ENCODE measurements at regions of chr7 and their contacts with region 1.

Region 1: GRCh38 chr7:140479062-140479738 is at the start of gene MKRN1:
- DNase-seq: peak; percentile 92
- ATAC-seq: peak; percentile 89
- H3K4me3 Mint-ChIP-seq: peak within 1 kb of the TSS; percentile 100
- H3K27ac Mint-ChIP-seq: peak within 1 kb of the TSS; percentile 99
- H3K4me1 Mint-ChIP-seq: peaks cover 30% of the 10 kb centered on the region
- H3K27me3 Mint-ChIP-seq: no peaks in the 10 kb centered on the region
- CTCF ChIP-seq: no peak
- total RNA-seq, gene MKRN1: 94.3 and 99.9 TPM in 2 replicates

Region 2: DNA sequence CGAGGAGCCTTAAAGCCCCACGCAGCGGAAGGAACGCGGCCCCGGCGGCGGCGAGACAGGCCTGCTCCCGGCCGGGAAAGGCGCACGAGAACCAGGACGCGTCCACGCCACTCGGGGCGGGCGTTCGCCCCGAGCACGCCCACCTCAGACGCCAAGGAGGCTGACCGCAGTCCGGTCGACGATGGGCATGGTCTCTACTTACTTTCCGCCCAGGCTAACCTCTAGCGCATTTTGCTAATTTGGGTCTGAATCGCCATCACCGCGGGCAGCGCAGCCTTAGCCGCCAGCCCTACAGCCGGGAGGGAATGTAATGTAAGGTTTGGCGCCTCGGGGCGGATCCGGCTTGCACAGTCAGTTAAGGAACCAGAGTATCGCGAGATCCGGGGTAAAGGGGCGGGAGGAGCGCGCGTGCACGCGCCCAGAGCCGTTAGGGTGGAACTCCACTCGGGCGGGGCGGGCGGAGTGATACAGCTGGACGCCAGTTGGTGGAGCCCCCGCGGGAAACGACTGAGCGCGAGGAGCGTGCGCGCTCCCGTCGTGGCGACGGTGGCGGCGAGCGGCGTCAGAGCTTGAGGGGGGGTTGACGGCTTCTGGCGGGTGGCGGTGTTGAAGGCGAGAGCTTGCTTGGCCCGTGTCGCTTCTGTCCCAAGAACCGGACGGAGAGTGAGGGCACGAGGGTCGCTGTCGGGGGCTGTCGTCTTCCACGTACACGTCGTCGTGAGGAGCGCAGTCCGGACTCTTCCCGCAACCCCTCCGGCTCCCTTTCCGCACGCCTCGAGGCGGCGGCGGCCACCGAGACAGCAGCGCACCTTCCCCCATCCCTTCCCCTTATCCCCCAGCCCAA is 1119.6 kb before region 1 on chr7 and contains the start of gene LUC7L2:
- CTCF ChIA-PET with region 1: no interaction called
- POLR2A ChIA-PET with region 1: no interaction called
- intact Hi-C with region 1: loop called (anchors 10 kb)
- DNase-seq: peak; percentile 97
- ATAC-seq: peak; percentile 78
- H3K4me3 Mint-ChIP-seq: peak within 1 kb of the TSS; percentile 98
- H3K27ac Mint-ChIP-seq: peak within 1 kb of the TSS; percentile 100
- H3K4me1 Mint-ChIP-seq: peaks cover 41% of the 10 kb centered on the region
- H3K27me3 Mint-ChIP-seq: no peaks in the 10 kb centered on the region
- CTCF ChIP-seq: no peak
- total RNA-seq, gene LUC7L2: 94.0 and 118 TPM in 2 replicates

Region 3: GRCh38 chr7:140230861-140231770 is 248.1 kb before region 1 on chr7:
- CTCF ChIA-PET with region 1: no interaction called
- POLR2A ChIA-PET with region 1: no interaction called
- intact Hi-C with region 1: loop called (anchors 5 kb)
- DNase-seq: no peak
- ATAC-seq: peak; percentile 30
- H3K4me3 Mint-ChIP-seq: peak overlapping the region; percentile 91
- H3K27ac Mint-ChIP-seq: peak overlapping the region; percentile 95
- H3K4me1 Mint-ChIP-seq: peaks cover 59% of the 10 kb centered on the region
- H3K27me3 Mint-ChIP-seq: no peaks in the 10 kb centered on the region
- CTCF ChIP-seq: no peak

Region 4: DNA sequence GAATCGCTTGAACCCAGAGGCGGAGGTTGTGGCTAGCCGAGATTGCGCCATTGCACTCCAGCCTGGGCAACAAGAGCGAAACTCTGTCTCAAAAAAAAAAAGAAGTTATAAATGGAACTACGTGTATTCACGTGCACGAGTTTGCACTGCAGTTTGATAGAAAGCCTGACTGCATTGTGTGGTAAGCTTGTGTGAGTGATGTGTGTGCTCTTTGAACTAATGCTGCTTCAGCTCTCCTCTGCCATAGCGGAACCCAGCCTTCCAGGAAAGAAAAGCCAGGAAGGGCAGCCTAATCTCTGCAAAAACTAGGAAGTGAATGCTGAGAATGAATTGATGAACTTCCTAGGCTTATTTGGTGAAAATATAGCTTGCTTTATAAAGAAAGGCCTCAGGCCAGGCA is 15.7 kb after region 1 on chr7:
- CTCF ChIA-PET with region 1: interaction called, 34 read pairs
- POLR2A ChIA-PET with region 1: interaction called, 5 read pairs
- intact Hi-C with region 1: loop called (anchors 1 kb)
- DNase-seq: no peak
- ATAC-seq: no peak
- H3K4me3 Mint-ChIP-seq: no peak overlapping the region
- H3K27ac Mint-ChIP-seq: no peak overlapping the region
- H3K4me1 Mint-ChIP-seq: no peaks in the 10 kb centered on the region
- H3K27me3 Mint-ChIP-seq: no peaks in the 10 kb centered on the region
- CTCF ChIP-seq: no peak

Region 5: GRCh38 chr7:140696680-140697446 is 217.7 kb after region 1 on chr7 and contains the start of gene NDUFB2:
- CTCF ChIA-PET with region 1: no interaction called
- POLR2A ChIA-PET with region 1: interaction called, 6 read pairs
- intact Hi-C with region 1: loop called (anchors 1 kb)
- DNase-seq: peak; percentile 90
- ATAC-seq: peak; percentile 86
- H3K4me3 Mint-ChIP-seq: peak within 1 kb of the TSS; percentile 94
- H3K27ac Mint-ChIP-seq: peak within 1 kb of the TSS; percentile 98
- H3K4me1 Mint-ChIP-seq: peaks cover 34% of the 10 kb centered on the region
- H3K27me3 Mint-ChIP-seq: no peaks in the 10 kb centered on the region
- CTCF ChIP-seq: no peak
- total RNA-seq, gene NDUFB2: 140 and 168 TPM in 2 replicates

Region 6: DNA sequence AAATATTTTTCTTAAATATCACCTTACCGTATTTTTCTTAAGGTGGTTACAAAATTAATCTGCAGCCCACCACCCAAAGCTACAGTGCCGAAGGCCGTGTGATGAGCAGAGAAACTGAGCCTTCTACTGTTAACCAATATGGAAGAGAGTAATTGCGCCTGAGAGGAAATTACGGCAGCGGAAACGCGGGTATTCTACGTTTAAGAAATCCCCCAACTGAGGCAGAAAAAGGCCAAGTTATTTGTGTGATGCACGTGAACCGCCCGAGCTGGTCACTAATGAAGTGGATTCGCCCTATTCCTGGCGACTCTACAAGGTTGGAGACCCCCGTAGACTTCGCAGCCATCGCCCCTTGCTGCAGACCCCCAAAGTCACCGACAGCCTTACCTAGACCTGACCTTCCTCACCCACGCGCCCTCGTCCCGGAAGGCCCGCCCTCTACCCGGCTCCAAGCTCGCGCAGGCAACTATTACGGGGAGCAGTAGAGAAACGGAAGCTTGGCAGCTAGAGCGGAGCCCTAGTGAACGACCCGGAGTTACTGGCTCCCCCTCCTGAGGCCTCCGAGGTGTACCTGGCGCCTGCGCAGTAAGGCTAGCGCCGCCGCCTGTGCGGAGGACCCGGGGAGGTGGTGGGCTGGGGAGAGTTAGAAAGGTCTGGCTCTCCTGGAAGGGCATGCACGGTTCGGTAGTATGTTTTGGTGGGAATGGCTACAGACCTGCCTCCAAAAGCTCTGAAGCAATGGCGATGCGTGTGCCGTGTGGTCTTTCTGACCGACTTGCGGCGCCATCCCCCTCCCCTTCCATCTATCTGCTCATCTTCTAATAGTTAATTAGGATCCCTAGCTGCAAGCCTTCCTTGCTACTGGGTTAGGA is 535.6 kb after region 1 on chr7 and contains the start of gene MRPS33:
- CTCF ChIA-PET with region 1: interaction called, 5 read pairs
- POLR2A ChIA-PET with region 1: interaction called, 19 read pairs
- intact Hi-C with region 1: loop called (anchors 1 kb)
- DNase-seq: peak; percentile 86
- ATAC-seq: peak; percentile 98
- H3K4me3 Mint-ChIP-seq: peak within 1 kb of the TSS; percentile 99
- H3K27ac Mint-ChIP-seq: peak within 1 kb of the TSS; percentile 100
- H3K4me1 Mint-ChIP-seq: peaks cover 20% of the 10 kb centered on the region
- H3K27me3 Mint-ChIP-seq: peaks cover 13% of the 10 kb centered on the region
- CTCF ChIP-seq: no peak
- total RNA-seq, gene MRPS33: 37.5 and 46.4 TPM in 2 replicates

Region 7: GRCh38 chr7:141737834-141738591 is 1258.8 kb after region 1 on chr7 and contains the start of gene SSBP1:
- CTCF ChIA-PET with region 1: no interaction called
- POLR2A ChIA-PET with region 1: no interaction called
- intact Hi-C with region 1: loop called (anchors 2 kb)
- DNase-seq: peak; percentile 79
- ATAC-seq: peak; percentile 89
- H3K4me3 Mint-ChIP-seq: peak within 1 kb of the TSS; percentile 99
- H3K27ac Mint-ChIP-seq: peak within 1 kb of the TSS; percentile 98
- H3K4me1 Mint-ChIP-seq: peaks cover 40% of the 10 kb centered on the region
- H3K27me3 Mint-ChIP-seq: no peaks in the 10 kb centered on the region
- CTCF ChIP-seq: peak; percentile 80
- total RNA-seq, gene SSBP1: 122 and 146 TPM in 2 replicates

Measured in activated B cell treated with CpG ODN at 0.5 μM for 24 hours (primary cell).